Endothelial cell of umbilical vein (primary cell): ENCODE measurements at regions of chr20 and their contacts with region 1.

Region 1: GRCh38 chr20:54680872-54681619 is 205.7 kb downstream of the DOK5 start:
- DNase-seq: peak; percentile 42
- H3K4me3 ChIP-seq: no peak overlapping the region
- H3K27ac ChIP-seq: no peak overlapping the region
- H3K4me1 ChIP-seq: no peaks in the 10 kb centered on the region
- H3K27me3 ChIP-seq: no peaks in the 10 kb centered on the region
- CTCF ChIP-seq: peak; percentile 52 to 55
- POLR2A ChIP-seq: no peak

Region 2: GRCh38 chr20:54668271-54669039 is 12.6 kb before region 1 on chr20:
- CTCF ChIA-PET with region 1: interaction called, 29 read pairs
- POLR2A ChIA-PET with region 1: no interaction called
- dilution Hi-C with region 1: no loop called
- intact Hi-C with region 1: no loop called
- DNase-seq: peak; percentile 34
- H3K4me3 ChIP-seq: no peak overlapping the region
- H3K27ac ChIP-seq: no peak overlapping the region
- H3K4me1 ChIP-seq: no peaks in the 10 kb centered on the region
- H3K27me3 ChIP-seq: no peaks in the 10 kb centered on the region
- CTCF ChIP-seq: peak; percentile 68 to 84
- POLR2A ChIP-seq: no peak

Region 3: DNA sequence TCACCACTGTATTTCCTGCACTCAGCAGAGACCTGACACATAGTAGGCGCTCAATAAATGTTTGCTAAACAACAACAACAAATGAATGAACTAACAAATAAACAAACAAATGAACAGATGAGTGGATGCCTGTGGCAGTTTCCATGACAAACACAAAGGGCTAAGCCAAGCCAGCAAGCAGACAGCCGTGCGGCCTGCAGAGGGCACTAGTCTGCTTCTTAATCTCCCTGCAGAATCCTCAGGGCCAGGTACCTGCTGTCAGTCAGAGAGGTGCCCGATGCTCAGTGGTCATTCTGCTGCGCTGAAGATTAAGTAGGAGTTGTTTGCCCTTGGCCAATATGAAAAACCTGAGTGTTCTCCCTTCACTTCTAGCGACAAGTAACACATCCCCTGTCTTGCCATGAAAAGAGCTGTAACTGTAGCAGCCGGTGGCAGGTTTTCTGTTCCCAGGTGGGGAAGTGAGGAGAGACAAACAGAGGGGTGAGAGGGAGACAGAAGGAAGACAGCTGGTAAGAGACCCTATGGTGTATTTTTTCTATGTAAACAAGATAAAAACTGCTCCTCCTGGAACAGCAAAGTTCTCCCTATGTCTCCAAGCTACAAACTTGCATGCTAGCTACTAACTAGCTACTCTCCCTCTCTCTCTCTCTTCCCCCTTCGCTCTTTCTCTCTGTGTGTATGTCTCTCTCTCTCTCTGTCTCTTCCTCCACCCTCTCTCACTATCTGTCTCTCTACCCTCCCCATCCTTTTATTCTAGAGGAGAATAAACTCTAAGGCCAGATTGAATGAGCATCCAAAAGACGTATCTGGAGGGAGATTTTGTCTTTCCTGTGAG is 1567.1 kb after region 1 on chr20 and contains the start of gene MC3R:
- CTCF ChIA-PET with region 1: interaction called, 6 read pairs
- POLR2A ChIA-PET with region 1: no interaction called
- dilution Hi-C with region 1: no loop called
- intact Hi-C with region 1: loop called (anchors 1 kb)
- DNase-seq: peak; percentile 2
- H3K4me3 ChIP-seq: no peak within 1 kb of the TSS
- H3K27ac ChIP-seq: no peak within 1 kb of the TSS
- H3K4me1 ChIP-seq: no peaks in the 10 kb centered on the region
- H3K27me3 ChIP-seq: no peaks in the 10 kb centered on the region
- CTCF ChIP-seq: peak; percentile 33 to 61
- POLR2A ChIP-seq: no peak
- total RNA-seq, gene MC3R: not detected in 2 replicates

Region 4: DNA sequence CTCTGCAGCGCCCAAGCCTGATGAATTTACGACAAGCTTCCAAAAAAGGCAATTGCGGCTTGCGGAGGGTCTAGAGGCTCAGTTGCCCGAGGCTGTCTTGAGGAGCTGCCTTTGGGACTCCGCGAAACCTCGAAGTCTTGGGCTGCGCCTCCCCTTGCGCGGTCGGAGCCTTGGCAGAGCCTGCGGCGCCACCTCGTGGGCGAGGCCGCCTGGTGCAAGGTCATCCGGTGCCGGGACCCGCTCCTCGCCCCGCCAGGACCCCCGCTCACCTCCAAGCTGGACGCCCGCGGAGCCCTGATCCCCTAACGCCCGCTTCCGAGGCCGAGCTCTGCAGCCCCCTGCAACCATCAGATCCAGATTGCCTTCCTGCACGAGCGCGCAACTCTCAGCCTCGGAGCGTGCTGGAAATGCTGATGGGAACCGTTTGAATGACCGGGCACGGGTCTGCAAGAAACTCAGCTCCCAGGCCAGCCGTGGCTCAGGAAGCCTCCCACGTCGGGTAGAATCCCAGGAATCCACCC is 1662.9 kb after region 1 on chr20:
- CTCF ChIA-PET with region 1: interaction called, 97 read pairs
- POLR2A ChIA-PET with region 1: no interaction called
- dilution Hi-C with region 1: no loop called
- intact Hi-C with region 1: loop called (anchors 1 kb)
- DNase-seq: peak; percentile 35
- H3K4me3 ChIP-seq: no peak overlapping the region
- H3K27ac ChIP-seq: no peak overlapping the region
- H3K4me1 ChIP-seq: no peaks in the 10 kb centered on the region
- H3K27me3 ChIP-seq: peaks cover 8 to 11% of the 10 kb centered on the region in 2 experiments
- CTCF ChIP-seq: peak; percentile 65 to 88
- POLR2A ChIP-seq: no peak

Region 5: GRCh38 chr20:56574531-56575142 is 1893.6 kb after region 1 on chr20:
- CTCF ChIA-PET with region 1: interaction called, 5 read pairs
- POLR2A ChIA-PET with region 1: no interaction called
- dilution Hi-C with region 1: no loop called
- intact Hi-C with region 1: loop called (anchors 2 kb)
- DNase-seq: no peak
- H3K4me3 ChIP-seq: no peak overlapping the region
- H3K27ac ChIP-seq: no peak overlapping the region
- H3K4me1 ChIP-seq: no peaks in the 10 kb centered on the region
- H3K27me3 ChIP-seq: no peaks in the 10 kb centered on the region
- CTCF ChIP-seq: no peak
- POLR2A ChIP-seq: no peak